IMR-90 (cell line): ENCODE measurements at regions of chr1 and their contacts with region 1.

Region 1: GRCh38 chr1:110850636-110851035 is 22.3 kb upstream of the CD53 start:
- DNase-seq: no peak
- ATAC-seq: no peak
- H3K4me3 ChIP-seq: no peak overlapping the region
- H3K27ac ChIP-seq: no peak overlapping the region
- H3K4me1 ChIP-seq: no peaks in the 10 kb centered on the region
- H3K27me3 ChIP-seq: no peaks in the 10 kb centered on the region
- CTCF ChIP-seq: no peak
- POLR2A ChIP-seq: no peak
- RAD21 ChIP-seq: no peak

Region 2: GRCh38 chr1:110657351-110657750 is 193.3 kb before region 1 on chr1:
- CTCF ChIA-PET with region 1: no interaction called
- POLR2A ChIA-PET with region 1: no interaction called
- dilution Hi-C with region 1: no loop called
- in situ Hi-C with region 1: no loop called
- intact Hi-C with region 1: no loop called
- DNase-seq: no peak
- ATAC-seq: no peak
- H3K4me3 ChIP-seq: no peak overlapping the region
- H3K27ac ChIP-seq: no peak overlapping the region
- H3K4me1 ChIP-seq: no peaks in the 10 kb centered on the region
- H3K27me3 ChIP-seq: no peaks in the 10 kb centered on the region
- CTCF ChIP-seq: no peak
- POLR2A ChIP-seq: no peak
- RAD21 ChIP-seq: no peak

Region 3: GRCh38 chr1:110990536-110990935 is 139.9 kb after region 1 on chr1:
- CTCF ChIA-PET with region 1: no interaction called
- POLR2A ChIA-PET with region 1: no interaction called
- dilution Hi-C with region 1: no loop called
- in situ Hi-C with region 1: no loop called
- intact Hi-C with region 1: loop called (anchors 2 kb)
- DNase-seq: no peak
- ATAC-seq: no peak
- H3K4me3 ChIP-seq: no peak overlapping the region
- H3K27ac ChIP-seq: no peak overlapping the region
- H3K4me1 ChIP-seq: no peaks in the 10 kb centered on the region
- H3K27me3 ChIP-seq: no peaks in the 10 kb centered on the region
- CTCF ChIP-seq: no peak
- POLR2A ChIP-seq: no peak
- RAD21 ChIP-seq: no peak

Region 4: GRCh38 chr1:111334169-111334568 is 483.5 kb after region 1 on chr1:
- CTCF ChIA-PET with region 1: no interaction called
- POLR2A ChIA-PET with region 1: no interaction called
- dilution Hi-C with region 1: no loop called
- in situ Hi-C with region 1: no loop called
- intact Hi-C with region 1: loop called (anchors 2 kb)
- DNase-seq: peak; percentile 49
- ATAC-seq: peak; percentile 75
- H3K4me3 ChIP-seq: no peak overlapping the region
- H3K27ac ChIP-seq: no peak overlapping the region
- H3K4me1 ChIP-seq: no peaks in the 10 kb centered on the region
- H3K27me3 ChIP-seq: peaks cover 4% of the 10 kb centered on the region; the same call in 1 of the 2 replicates
- CTCF ChIP-seq: peak; percentile 83
- POLR2A ChIP-seq: no peak
- RAD21 ChIP-seq: peak; percentile 80